CD8-positive, alpha-beta T cell (primary cell): ENCODE measurements at regions of chr7 and their contacts with region 1.

Region 1: DNA sequence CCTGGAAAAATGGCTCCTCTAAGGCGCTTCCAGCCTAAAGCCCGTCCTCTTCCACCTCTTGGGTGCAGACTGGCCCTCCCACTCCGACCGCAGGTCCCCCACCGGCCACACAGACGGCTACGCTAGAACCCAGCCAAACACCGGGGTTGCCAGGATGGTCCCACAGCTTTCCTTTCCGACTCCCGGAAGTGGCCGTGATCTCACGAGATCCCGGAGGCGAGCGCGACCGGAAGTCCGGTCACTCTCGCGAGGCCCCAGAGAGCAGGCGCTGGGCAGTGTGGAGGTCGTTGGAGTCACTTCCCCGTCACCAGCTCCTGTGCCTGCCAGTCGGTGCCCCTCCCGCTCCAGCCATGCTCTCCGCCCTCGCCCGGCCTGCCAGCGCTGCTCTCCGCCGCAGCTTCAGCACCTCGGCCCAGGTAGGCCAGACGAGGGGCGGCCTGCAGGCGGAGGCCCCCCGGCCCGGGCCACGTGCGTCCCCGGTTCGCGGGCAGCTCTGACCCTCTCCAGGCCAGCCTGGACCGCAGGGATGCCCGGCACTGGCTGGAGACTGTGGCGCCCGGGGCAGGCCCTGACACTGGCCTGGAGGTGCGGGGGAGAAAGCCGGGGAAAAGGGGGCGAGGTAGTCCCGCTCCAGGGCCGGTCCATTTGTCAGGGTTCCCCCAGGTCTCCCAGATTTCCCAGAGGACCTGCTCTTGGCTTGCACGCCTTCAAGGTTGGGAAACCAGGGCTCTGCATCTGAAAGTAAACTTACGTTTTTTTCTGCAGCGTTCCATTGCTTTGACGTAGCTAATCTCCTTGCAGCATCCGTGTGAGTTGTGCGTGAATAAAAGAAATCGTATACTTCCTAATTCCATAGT is at the starts of genes MDH2 and STYXL1:
- DNase-seq: peak; percentile 72 to 95 (median 86)
- ATAC-seq: peak; percentile 82
- H3K4me3 ChIP-seq: peak within 1 kb of the TSS; percentile 84 to 95
- H3K4me3 Mint-ChIP-seq: peak within 1 kb of the TSS; percentile 99
- H3K27ac ChIP-seq: peak within 1 kb of the TSS; percentile 87
- H3K27ac Mint-ChIP-seq: peak within 1 kb of the TSS; percentile 98
- H3K4me1 ChIP-seq: peaks cover 16% of the 10 kb centered on the region
- H3K4me1 Mint-ChIP-seq: peaks cover 59% of the 10 kb centered on the region
- H3K27me3 ChIP-seq: no peaks in the 10 kb centered on the region
- H3K27me3 Mint-ChIP-seq: no peaks in the 10 kb centered on the region
- CTCF ChIP-seq: no peak
- total RNA-seq, gene MDH2: 73.0 to 74.7 TPM
- total RNA-seq, gene STYXL1: 4.2 to 6.4 TPM

Region 2: DNA sequence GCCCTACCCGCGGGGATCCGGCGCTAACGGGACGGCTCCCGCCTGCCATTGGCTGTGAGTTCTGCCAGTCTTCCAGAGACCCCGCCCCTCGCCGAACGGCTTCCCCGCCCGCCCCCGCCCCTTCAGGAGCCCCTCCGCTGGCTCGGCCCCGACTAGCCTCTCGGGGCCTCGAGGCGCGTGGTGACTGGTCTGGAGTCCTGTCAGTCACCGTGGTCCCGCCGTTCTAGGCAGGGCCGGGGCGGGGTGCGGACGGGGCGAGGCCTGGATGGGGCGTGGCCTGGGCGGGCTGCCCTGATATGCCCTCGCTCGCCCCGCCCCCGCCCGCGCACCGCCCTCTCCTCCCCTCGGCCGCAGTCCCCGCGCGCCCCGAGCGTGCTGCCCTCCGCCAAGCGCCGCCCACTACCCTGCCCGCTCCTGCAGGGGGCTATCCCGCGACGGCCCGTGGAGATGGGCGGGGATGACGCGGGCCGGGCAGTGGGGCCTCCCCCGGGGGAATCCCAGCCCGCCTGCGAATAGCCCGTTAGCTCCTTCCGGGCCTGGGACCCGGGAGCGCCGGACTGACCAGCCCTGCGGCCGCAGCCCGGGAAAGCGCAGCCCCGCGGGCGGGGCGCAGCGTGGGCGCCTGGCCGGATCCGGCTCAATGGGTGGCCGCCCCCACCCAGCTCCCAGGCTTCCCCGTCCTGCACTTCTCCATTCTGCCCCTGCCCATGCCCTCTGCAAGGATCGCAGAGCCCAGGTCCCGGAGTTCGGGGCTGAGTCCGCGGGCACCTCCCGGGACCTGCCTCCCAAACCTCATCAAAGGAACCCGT is 308.8 kb before region 1 on chr7:
- CTCF ChIA-PET with region 1: no interaction called
- POLR2A ChIA-PET with region 1: no interaction called
- intact Hi-C with region 1: loop called in 1 of 2 experiments (anchors 5 kb)
- DNase-seq: peak; percentile 99 to 100 (median 99)
- ATAC-seq: peak; percentile 92
- H3K4me3 ChIP-seq: peak overlapping the region; percentile 85 to 92
- H3K4me3 Mint-ChIP-seq: peak overlapping the region; percentile 99
- H3K27ac ChIP-seq: peak overlapping the region; percentile 71
- H3K27ac Mint-ChIP-seq: peak overlapping the region; percentile 98
- H3K4me1 ChIP-seq: peaks cover 13% of the 10 kb centered on the region
- H3K4me1 Mint-ChIP-seq: peaks cover 15% of the 10 kb centered on the region
- H3K27me3 ChIP-seq: peaks cover 0 to 4% of the 10 kb centered on the region in 2 experiments
- H3K27me3 Mint-ChIP-seq: no peaks in the 10 kb centered on the region
- CTCF ChIP-seq: no peak

Region 3: GRCh38 chr7:75914730-75915585 is 133.1 kb before region 1 on chr7 and contains the start of gene POR:
- CTCF ChIA-PET with region 1: interaction called, 3 read pairs
- POLR2A ChIA-PET with region 1: interaction called, 12 read pairs
- intact Hi-C with region 1: loop called in 1 of 2 experiments (anchors 1 kb)
- DNase-seq: peak; percentile 94 to 99 (median 98)
- ATAC-seq: peak; percentile 94
- H3K4me3 ChIP-seq: peak within 1 kb of the TSS; percentile 98 to 99
- H3K4me3 Mint-ChIP-seq: peak within 1 kb of the TSS; percentile 92
- H3K27ac ChIP-seq: peak within 1 kb of the TSS; percentile 92 to 97
- H3K27ac Mint-ChIP-seq: peak within 1 kb of the TSS; percentile 96
- H3K4me1 ChIP-seq: peaks cover 24% of the 10 kb centered on the region
- H3K4me1 Mint-ChIP-seq: peaks cover 37% of the 10 kb centered on the region
- H3K27me3 ChIP-seq: no peaks in the 10 kb centered on the region
- H3K27me3 Mint-ChIP-seq: no peaks in the 10 kb centered on the region
- CTCF ChIP-seq: no peak
- total RNA-seq, gene POR: 64.4 to 66.7 TPM

Region 4: DNA sequence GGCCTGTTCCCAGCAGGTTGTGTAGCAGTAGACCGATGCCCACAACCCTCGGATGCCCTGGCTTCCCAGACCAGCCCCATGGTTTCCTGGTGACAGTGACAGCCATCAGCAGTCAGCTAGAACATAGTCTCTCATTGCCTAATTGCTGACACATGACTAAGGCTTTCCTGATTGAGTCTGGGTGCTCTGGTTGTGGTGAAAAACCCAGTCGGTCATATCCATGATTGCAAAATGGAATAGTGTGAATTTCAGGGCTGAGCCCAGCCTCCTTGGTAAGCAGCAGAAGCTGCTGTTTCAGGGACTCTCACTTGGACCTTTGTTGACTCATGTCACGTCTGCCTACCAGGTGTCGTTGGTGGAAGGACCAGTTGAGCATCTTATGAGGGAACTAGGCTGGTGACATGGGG is 96.5 kb before region 1 on chr7:
- CTCF ChIA-PET with region 1: no interaction called
- POLR2A ChIA-PET with region 1: no interaction called
- intact Hi-C with region 1: no loop called
- DNase-seq: peak in 1 of 9 experiments; percentile 34
- ATAC-seq: no peak
- H3K4me3 ChIP-seq: no peak overlapping the region
- H3K4me3 Mint-ChIP-seq: no peak overlapping the region
- H3K27ac ChIP-seq: no peak overlapping the region
- H3K27ac Mint-ChIP-seq: no peak overlapping the region
- H3K4me1 ChIP-seq: no peaks in the 10 kb centered on the region
- H3K4me1 Mint-ChIP-seq: peaks cover 10% of the 10 kb centered on the region
- H3K27me3 ChIP-seq: no peaks in the 10 kb centered on the region
- H3K27me3 Mint-ChIP-seq: no peaks in the 10 kb centered on the region
- CTCF ChIP-seq: no peak

Region 5: DNA sequence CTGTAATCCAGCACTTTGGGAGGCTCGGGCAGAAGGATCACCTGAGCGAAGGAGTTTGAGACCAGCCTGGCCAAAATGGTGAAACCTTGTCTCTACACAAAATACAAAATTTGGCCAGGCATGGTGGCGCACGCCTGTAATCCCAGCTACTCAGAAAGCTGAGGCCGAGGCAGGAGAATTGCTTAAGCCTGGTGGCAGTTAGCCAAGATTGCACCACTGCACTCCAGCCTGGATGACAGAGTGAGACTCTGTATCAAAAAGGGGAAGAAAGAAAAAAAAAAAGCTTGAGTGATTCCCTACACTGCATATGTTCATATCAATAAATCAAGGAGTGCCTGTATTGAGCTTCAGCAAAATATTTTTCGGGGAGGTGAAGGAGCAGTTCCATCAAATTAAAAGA is 107.9 kb after region 1 on chr7:
- CTCF ChIA-PET with region 1: no interaction called
- POLR2A ChIA-PET with region 1: no interaction called
- intact Hi-C with region 1: no loop called
- DNase-seq: no peak
- ATAC-seq: no peak
- H3K4me3 ChIP-seq: no peak overlapping the region
- H3K4me3 Mint-ChIP-seq: no peak overlapping the region
- H3K27ac ChIP-seq: no peak overlapping the region
- H3K27ac Mint-ChIP-seq: no peak overlapping the region
- H3K4me1 ChIP-seq: peaks cover 34% of the 10 kb centered on the region
- H3K4me1 Mint-ChIP-seq: peaks cover 20% of the 10 kb centered on the region
- H3K27me3 ChIP-seq: no peaks in the 10 kb centered on the region
- H3K27me3 Mint-ChIP-seq: no peaks in the 10 kb centered on the region
- CTCF ChIP-seq: no peak

Region 6: GRCh38 chr7:76166404-76167255 is 118.6 kb after region 1 on chr7:
- CTCF ChIA-PET with region 1: no interaction called
- POLR2A ChIA-PET with region 1: interaction called, 5 read pairs
- intact Hi-C with region 1: loop called (anchors 1 to 5 kb)
- DNase-seq: peak; percentile 84 to 96 (median 90)
- ATAC-seq: peak; percentile 90
- H3K4me3 ChIP-seq: peak overlapping the region; percentile 78 to 87
- H3K4me3 Mint-ChIP-seq: peak overlapping the region; percentile 92
- H3K27ac ChIP-seq: peak overlapping the region; percentile 92 to 93
- H3K27ac Mint-ChIP-seq: peak overlapping the region; percentile 98
- H3K4me1 ChIP-seq: peaks cover 5% of the 10 kb centered on the region
- H3K4me1 Mint-ChIP-seq: peaks cover 7% of the 10 kb centered on the region
- H3K27me3 ChIP-seq: no peaks in the 10 kb centered on the region
- H3K27me3 Mint-ChIP-seq: no peaks in the 10 kb centered on the region
- CTCF ChIP-seq: no peak

Region 7: DNA sequence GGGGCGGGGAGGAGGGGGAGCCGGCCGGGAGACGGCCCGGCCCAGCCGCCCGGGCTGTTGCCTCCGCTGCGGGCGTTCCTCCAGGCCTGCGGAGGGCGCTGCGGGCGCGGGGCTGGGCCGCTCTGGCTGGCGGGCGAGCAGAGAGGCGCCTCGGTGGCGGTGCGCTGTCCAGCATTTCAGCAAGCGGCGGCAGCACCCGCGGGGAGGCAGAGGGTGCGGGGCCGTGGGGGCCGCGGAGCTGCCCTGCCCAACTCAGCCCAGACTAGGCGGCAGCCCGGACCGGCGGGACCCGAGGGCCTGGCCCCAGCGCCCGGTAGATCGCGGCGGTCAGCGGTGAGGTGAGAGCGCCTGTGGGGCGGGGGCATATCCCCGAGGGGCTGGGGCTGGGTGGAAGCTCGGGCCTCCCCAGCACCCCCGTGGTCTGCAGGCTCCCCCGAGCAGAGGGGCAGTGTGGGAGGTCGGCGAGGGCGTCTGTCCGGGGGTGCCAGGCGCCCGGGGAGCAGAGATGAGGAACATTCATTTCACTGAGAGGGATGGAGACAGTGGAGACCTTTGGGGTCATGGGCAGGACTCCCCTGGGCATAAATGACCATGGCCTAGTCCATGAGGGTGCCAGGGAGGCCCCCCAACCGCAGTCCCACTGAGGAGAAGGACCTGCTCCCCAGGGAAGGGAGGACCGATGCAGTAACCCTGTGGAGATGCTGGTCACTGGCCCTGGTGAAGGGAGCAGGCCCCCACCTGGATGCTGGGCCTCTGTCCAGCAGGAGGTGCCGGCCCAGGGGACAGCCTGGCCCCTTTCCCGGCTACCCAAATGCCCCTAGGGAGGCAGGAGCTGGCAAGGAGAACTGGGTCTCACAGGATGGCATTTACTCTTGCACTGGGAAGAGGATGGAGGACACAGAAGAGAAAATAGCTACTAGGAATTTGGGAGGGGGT is 154.0 kb after region 1 on chr7 and contains the start of gene SRRM3:
- CTCF ChIA-PET with region 1: no interaction called
- POLR2A ChIA-PET with region 1: no interaction called
- intact Hi-C with region 1: no loop called
- DNase-seq: peak; percentile 74 to 89 (median 81)
- ATAC-seq: peak; percentile 99
- H3K4me3 ChIP-seq: no peak within 1 kb of the TSS
- H3K4me3 Mint-ChIP-seq: no peak within 1 kb of the TSS
- H3K27ac ChIP-seq: no peak within 1 kb of the TSS
- H3K27ac Mint-ChIP-seq: no peak within 1 kb of the TSS
- H3K4me1 ChIP-seq: no peaks in the 10 kb centered on the region
- H3K4me1 Mint-ChIP-seq: no peaks in the 10 kb centered on the region
- H3K27me3 ChIP-seq: peaks cover 7 to 10% of the 10 kb centered on the region in 2 experiments
- H3K27me3 Mint-ChIP-seq: peaks cover 40% of the 10 kb centered on the region
- CTCF ChIP-seq: peak; percentile 56
- total RNA-seq, gene SRRM3: not detected

Region 8: DNA sequence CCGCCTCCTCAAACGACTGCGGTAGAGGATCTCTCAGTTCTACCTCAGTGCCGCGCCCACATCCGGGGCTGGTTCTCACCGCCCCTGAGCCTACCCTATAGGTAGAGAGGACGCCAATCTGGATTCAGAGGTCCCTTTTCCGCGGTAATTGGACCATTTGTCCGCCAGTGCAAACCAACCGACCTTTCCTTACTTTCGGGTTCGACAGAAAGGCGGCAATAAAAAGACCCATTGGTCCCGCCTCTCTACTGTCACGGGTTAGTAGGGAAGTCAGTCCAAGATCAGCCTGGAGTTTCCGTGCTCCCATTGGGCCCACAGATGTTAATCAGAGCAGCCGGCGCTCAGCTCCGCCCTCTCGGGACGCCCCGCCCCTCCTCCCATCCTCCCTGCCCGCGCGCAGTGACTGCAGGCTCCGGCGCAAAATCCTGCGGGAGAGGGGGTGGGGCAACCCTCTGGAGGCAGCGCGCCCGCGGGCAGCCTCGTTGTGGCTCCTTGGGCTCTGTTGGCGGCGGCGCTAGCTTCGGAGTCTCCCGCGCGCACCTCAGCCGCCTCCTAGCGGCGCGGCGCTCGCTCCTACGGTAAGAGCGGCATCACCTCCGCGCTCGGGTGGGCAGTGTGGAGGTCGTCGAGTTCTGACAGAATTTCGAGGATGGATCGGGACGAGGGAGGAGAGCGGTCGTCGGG is 1750.5 kb after region 1 on chr7 and contains the starts of genes PHTF2 and TMEM60:
- CTCF ChIA-PET with region 1: no interaction called
- POLR2A ChIA-PET with region 1: no interaction called
- intact Hi-C with region 1: loop called in 1 of 2 experiments (anchors 10 kb)
- DNase-seq: peak; percentile 85 to 98 (median 90)
- ATAC-seq: peak; percentile 88
- H3K4me3 ChIP-seq: peak within 1 kb of the TSS; percentile 70 to 81
- H3K4me3 Mint-ChIP-seq: peak within 1 kb of the TSS; percentile 97
- H3K27ac ChIP-seq: peak within 1 kb of the TSS; percentile 61 to 75
- H3K27ac Mint-ChIP-seq: peak within 1 kb of the TSS; percentile 96
- H3K4me1 ChIP-seq: peaks cover 39% of the 10 kb centered on the region
- H3K4me1 Mint-ChIP-seq: peaks cover 78% of the 10 kb centered on the region
- H3K27me3 ChIP-seq: no peaks in the 10 kb centered on the region
- H3K27me3 Mint-ChIP-seq: no peaks in the 10 kb centered on the region
- CTCF ChIP-seq: peak; percentile 67
- total RNA-seq, gene PHTF2: 10.2 to 14.1 TPM
- total RNA-seq, gene TMEM60: 2.2 TPM